Heart right ventricle (tissue), 16 donors: ENCODE measurements at regions of chr16 and their contacts with region 1.

Region 1: GRCh38 chr16:19879241-19879792 is 5.3 kb downstream of the GPRC5B start:
- DNase-seq: peak in 1 of 2 donors; percentile 57
- ATAC-seq: peak in 3 of 8 donors; percentile 23 to 54 (median 46)
- H3K4me3 ChIP-seq: no peak overlapping the region
- H3K27ac ChIP-seq: peak overlapping the region in 8 of 10 donors; percentile 22 to 97 (median 64)
- H3K4me1 ChIP-seq: peaks cover 14 to 87% (median 78%) of the 10 kb centered on the region in 9 donors
- H3K27me3 ChIP-seq: peaks cover 0 to 25% (median 0%) of the 10 kb centered on the region in 7 donors
- CTCF ChIP-seq: peak in 1 of 9 donors; percentile 11

Region 2: GRCh38 chr16:19710191-19710908 is 169.0 kb before region 1 on chr16:
- intact Hi-C with region 1: loop called in 7 of 10 experiments (anchors 5 to 10 kb)
- DNase-seq: no peak
- ATAC-seq: peak; percentile 43 to 83 (median 70)
- H3K4me3 ChIP-seq: peak overlapping the region in 2 of 10 donors; percentile 0 to 9
- H3K27ac ChIP-seq: peak overlapping the region; percentile 52 to 87 (median 76)
- H3K4me1 ChIP-seq: peaks cover 0 to 47% (median 28%) of the 10 kb centered on the region in 9 donors
- H3K27me3 ChIP-seq: no peaks in the 10 kb centered on the region
- CTCF ChIP-seq: no peak

Region 3: GRCh38 chr16:19765860-19766553 is 113.3 kb before region 1 on chr16:
- intact Hi-C with region 1: loop called in 2 of 10 experiments (anchors 10 kb)
- DNase-seq: peak; percentile 59 to 67
- ATAC-seq: peak; percentile 38 to 79 (median 76)
- H3K4me3 ChIP-seq: peak overlapping the region in 2 of 10 donors; percentile 3 to 6
- H3K27ac ChIP-seq: peak overlapping the region in 5 of 10 donors; percentile 43 to 67 (median 47)
- H3K4me1 ChIP-seq: peaks cover 0 to 48% (median 15%) of the 10 kb centered on the region in 9 donors
- H3K27me3 ChIP-seq: no peaks in the 10 kb centered on the region
- CTCF ChIP-seq: no peak

Region 4: GRCh38 chr16:19804538-19805323 is 74.6 kb before region 1 on chr16:
- intact Hi-C with region 1: loop called in 2 of 10 experiments (anchors 5 kb)
- DNase-seq: peak; percentile 66 to 90
- ATAC-seq: peak; percentile 79 to 89 (median 87)
- H3K4me3 ChIP-seq: no peak overlapping the region
- H3K27ac ChIP-seq: peak overlapping the region; percentile 51 to 85 (median 72)
- H3K4me1 ChIP-seq: peaks cover 6 to 58% (median 37%) of the 10 kb centered on the region in 9 donors
- H3K27me3 ChIP-seq: no peaks in the 10 kb centered on the region
- CTCF ChIP-seq: no peak

Region 5: DNA sequence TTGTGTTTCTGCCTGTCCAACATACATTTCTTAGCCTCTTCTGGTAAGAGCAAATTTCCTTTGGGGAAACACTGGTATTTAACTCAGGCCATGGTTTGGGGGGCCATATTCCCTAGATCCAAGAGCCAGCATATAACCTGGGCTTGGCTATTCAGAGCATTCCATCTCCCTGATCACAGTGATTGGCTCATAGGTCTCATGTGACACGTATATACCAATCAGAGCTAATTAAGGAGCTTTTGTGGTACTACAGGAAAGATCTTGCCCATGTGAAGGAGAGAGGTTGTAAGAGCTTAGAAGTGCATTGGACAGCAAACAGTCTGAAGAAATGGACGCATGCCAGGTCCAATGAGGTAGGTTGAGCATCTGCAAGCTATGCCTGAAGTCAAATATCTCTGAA is 227.8 kb after region 1 on chr16:
- intact Hi-C with region 1: no loop called
- DNase-seq: no peak
- ATAC-seq: no peak
- H3K4me3 ChIP-seq: no peak overlapping the region
- H3K27ac ChIP-seq: no peak overlapping the region
- H3K4me1 ChIP-seq: no peaks in the 10 kb centered on the region
- H3K27me3 ChIP-seq: peaks cover 0 to 35% (median 7%) of the 10 kb centered on the region in 7 donors
- CTCF ChIP-seq: no peak

Region 6: DNA sequence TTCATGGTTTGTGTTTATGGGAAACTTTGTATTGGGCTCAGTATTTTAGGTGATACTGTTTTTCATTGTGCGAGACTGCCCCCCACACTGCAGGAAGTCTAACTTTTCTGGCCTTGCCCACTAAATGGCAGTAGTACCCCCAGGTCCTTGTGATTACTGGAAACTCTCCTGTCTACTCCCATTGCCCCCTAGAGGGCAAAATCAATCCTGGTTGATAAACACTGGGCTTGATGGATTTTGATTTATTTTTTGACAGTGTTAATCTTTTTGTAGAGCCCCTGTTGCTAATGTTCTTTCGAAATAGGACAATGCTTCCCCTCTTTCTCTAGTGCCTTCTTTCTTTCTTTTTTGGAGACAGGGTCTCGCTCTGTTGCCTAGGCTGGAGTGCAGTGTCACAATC is 1735.6 kb after region 1 on chr16:
- intact Hi-C with region 1: no loop called
- DNase-seq: no peak
- ATAC-seq: no peak
- H3K4me3 ChIP-seq: no peak overlapping the region
- H3K27ac ChIP-seq: no peak overlapping the region
- H3K4me1 ChIP-seq: peaks cover 0 to 70% (median 29%) of the 10 kb centered on the region in 9 donors
- H3K27me3 ChIP-seq: no peaks in the 10 kb centered on the region
- CTCF ChIP-seq: no peak